Aorta (tissue), 5 donors: ENCODE measurements at regions of chr19 and their contacts with region 1.

Region 1: GRCh38 chr19:1094975-1095701 is at the start of gene POLR2E:
- DNase-seq: peak; percentile 99
- ATAC-seq: peak; percentile 97
- H3K4me3 ChIP-seq: peak within 1 kb of the TSS; percentile 81 to 82
- H3K27ac ChIP-seq: no peak within 1 kb of the TSS
- H3K4me1 ChIP-seq: no peaks in the 10 kb centered on the region
- H3K27me3 ChIP-seq: no peaks in the 10 kb centered on the region
- total RNA-seq, gene POLR2E: 83.5 to 95.6 TPM

Region 2: DNA sequence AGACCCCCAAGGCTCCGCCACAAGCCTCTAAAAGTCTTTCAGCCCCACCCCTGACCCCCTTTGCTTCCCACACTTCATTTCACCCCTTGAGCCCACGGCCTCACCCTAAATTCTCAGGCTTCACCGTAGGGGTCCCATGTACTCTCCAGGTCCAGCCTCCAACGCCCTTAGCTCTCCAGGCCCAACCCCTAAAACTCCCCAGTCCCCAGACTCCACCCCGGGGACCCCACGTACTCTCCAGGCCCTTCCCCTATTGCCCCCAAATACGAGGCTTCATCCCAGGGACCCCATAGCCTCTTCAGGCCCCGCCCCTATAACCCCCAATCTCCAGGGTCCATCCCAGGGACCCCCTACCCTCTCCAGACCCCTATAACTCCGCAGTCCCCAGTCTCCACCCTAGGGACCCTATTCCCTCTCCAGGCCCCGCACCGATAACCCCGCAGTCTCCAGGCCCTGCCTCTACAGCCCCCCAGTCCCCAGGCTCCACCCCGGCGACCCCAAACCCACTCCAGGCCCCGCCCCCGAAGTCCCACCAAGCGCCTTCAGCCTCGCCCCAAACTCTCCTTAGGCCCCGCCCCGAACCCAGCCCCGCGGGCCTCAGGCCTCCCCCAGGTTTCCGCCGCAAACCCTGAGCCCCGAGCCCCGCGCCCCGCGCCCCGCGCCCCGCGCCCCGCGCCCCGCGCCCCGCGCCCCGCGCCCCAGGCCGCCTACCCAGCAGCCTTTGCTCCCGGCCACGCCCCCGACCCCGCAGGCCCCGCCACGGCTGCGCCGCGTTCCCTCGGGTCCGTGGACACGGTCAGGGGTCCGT is 202.7 kb before region 1 on chr19:
- intact Hi-C with region 1: loop called in 1 of 2 experiments (anchors 10 kb)
- DNase-seq: no peak
- ATAC-seq: peak; percentile 49
- H3K4me3 ChIP-seq: peak overlapping the region; percentile 67 to 93
- H3K27ac ChIP-seq: peak overlapping the region in 1 of 2 donors; percentile 70
- H3K4me1 ChIP-seq: no peaks in the 10 kb centered on the region
- H3K27me3 ChIP-seq: no peaks in the 10 kb centered on the region

Region 3: GRCh38 chr19:1039646-1040475 is 55.3 kb before region 1 on chr19 and contains the start of gene ABCA7:
- intact Hi-C with region 1: loop called (anchors 5 kb)
- DNase-seq: peak; percentile 98 to 99
- ATAC-seq: peak; percentile 94
- H3K4me3 ChIP-seq: peak within 1 kb of the TSS in 1 of 2 donors; percentile 27
- H3K27ac ChIP-seq: no peak within 1 kb of the TSS
- H3K4me1 ChIP-seq: no peaks in the 10 kb centered on the region
- H3K27me3 ChIP-seq: no peaks in the 10 kb centered on the region
- total RNA-seq, gene ABCA7: 9.5 to 20.6 TPM